Naive thymus-derived CD8-positive, alpha-beta T cell (primary cell): ENCODE measurements at regions of chr13 and their contacts with region 1.

Region 1: GRCh38 chr13:19863323-19864023 is at the start of gene ZMYM5:
- DNase-seq: peak; percentile 88 to 98 (median 92)
- ATAC-seq: peak; percentile 81 to 82
- H3K4me3 Mint-ChIP-seq: peak within 1 kb of the TSS; percentile 89 to 98 (median 97)
- H3K27ac Mint-ChIP-seq: peak within 1 kb of the TSS; percentile 93 to 98 (median 96)
- H3K4me1 Mint-ChIP-seq: peaks cover 10 to 40% (median 39%) of the 10 kb centered on the region in 4 donors
- H3K27me3 Mint-ChIP-seq: no peaks in the 10 kb centered on the region
- polyA plus RNA-seq, gene ZMYM5: 20.7 to 27.5 (median 23.8) TPM

Region 2: DNA sequence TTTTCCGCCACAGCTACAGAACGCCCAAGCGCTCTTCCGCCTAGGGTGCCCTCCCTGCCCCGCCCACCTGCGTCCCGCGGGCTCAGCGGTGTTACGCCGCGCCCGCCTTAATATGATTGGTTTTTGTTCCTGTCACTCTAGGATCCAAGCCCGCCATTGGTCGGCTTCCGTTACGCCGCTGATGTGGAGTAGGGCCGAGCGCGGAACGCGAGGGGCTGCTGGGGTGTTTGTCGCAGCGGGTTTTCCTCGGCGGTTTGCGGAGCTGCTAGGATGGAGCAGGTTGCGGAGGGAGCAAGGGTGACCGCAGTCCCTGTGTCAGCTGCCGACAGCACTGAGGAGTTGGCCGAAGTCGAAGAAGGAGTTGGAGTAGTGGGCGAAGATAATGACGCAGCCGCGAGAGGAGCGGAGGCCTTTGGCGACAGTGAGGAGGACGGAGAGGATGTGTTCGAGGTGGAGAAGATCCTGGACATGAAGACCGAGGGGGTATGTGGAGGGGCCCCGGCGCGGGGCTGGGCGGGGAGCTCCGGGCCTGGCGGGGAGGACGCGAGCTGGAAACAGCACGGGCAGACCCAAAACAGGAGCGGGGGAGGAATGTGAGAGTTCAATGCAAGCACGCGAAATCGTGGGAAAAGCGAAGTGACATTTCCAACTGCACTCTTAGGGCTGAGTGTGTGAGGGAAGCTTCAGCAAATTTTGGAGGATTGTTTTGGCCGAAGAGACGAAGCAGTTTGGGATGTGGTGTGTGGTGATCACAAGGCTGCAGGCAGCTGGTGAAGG is 229.8 kb before region 1 on chr13 and contains the start of gene MPHOSPH8:
- POLR2A ChIA-PET with region 1: interaction called, 24 read pairs
- DNase-seq: peak; percentile 86 to 97 (median 92)
- ATAC-seq: peak; percentile 96 to 98
- H3K4me3 Mint-ChIP-seq: peak within 1 kb of the TSS; percentile 95 to 100 (median 100)
- H3K27ac Mint-ChIP-seq: peak within 1 kb of the TSS; percentile 99 to 100 (median 100)
- H3K4me1 Mint-ChIP-seq: peaks cover 20 to 52% (median 36%) of the 10 kb centered on the region in 4 donors
- H3K27me3 Mint-ChIP-seq: no peaks in the 10 kb centered on the region
- polyA plus RNA-seq, gene MPHOSPH8: 8.6 to 17.8 (median 14.4) TPM

Region 3: GRCh38 chr13:19782049-19782726 is 81.3 kb before region 1 on chr13:
- POLR2A ChIA-PET with region 1: interaction called, 58 read pairs
- DNase-seq: peak in 8 of 10 donors; percentile 12 to 64 (median 50)
- ATAC-seq: peak; percentile 58 to 70
- H3K4me3 Mint-ChIP-seq: peak overlapping the region; percentile 89 to 99 (median 98)
- H3K27ac Mint-ChIP-seq: peak overlapping the region; percentile 98 to 100 (median 99)
- H3K4me1 Mint-ChIP-seq: peaks cover 1 to 20% (median 14%) of the 10 kb centered on the region in 4 donors
- H3K27me3 Mint-ChIP-seq: peaks cover 0 to 4% (median 0%) of the 10 kb centered on the region in 5 donors

Region 4: DNA sequence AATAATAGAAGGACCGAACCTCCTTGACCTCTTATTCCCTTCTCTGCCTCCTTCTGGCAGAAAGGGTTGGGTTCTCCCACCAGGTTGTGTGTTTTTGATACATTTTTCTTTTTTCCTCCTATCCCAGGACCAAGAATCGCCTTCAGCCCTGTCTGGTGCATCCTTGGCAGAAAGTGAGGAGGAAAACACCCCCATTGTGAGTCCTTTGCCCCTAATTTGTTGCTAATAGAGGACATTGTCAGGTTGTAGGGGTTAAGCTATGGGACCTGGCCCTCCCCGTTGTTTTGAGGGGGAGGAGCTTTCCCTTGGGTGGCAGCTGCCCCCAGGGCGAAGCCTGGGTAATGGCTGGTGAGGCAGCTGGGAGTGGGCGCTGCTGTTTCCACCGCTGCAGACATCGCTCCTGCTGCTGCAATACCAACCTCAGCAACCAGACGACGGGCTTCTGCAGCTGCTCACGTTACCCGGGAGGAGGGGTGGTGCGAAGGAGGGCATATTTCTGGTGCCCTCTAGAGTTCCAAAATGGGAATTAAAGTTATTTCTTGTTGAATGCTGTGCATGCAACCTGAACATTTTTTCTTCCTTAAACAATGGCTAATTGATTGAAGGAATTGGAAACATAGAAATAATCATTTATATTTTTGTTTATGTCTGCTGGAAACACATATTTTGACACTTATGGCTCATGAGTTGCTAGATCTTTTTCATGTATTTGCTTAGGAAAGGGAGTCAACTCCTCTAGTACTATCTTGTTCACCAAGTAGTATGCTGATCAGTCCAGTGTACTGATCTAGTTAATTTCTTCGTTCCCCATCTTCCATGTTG is 96.6 kb after region 1 on chr13:
- POLR2A ChIA-PET with region 1: interaction called, 19 read pairs
- DNase-seq: peak; percentile 70 to 93 (median 84)
- ATAC-seq: peak; percentile 46 to 48
- H3K4me3 Mint-ChIP-seq: peak overlapping the region; percentile 92 to 100 (median 96)
- H3K27ac Mint-ChIP-seq: peak overlapping the region; percentile 93 to 99 (median 98)
- H3K4me1 Mint-ChIP-seq: peaks cover 18 to 46% (median 37%) of the 10 kb centered on the region in 4 donors
- H3K27me3 Mint-ChIP-seq: no peaks in the 10 kb centered on the region

Region 5: GRCh38 chr13:20073775-20074174 is 210.3 kb after region 1 on chr13:
- POLR2A ChIA-PET with region 1: no interaction called
- DNase-seq: no peak
- ATAC-seq: no peak
- H3K4me3 Mint-ChIP-seq: no peak overlapping the region
- H3K27ac Mint-ChIP-seq: peak overlapping the region in 2 of 10 donors; percentile 5 to 13
- H3K4me1 Mint-ChIP-seq: peaks cover 0 to 12% (median under 1%) of the 10 kb centered on the region in 4 donors
- H3K27me3 Mint-ChIP-seq: no peaks in the 10 kb centered on the region